ENCODE measurements at regions of chr12 and their contacts with region 1.

Region 1: DNA sequence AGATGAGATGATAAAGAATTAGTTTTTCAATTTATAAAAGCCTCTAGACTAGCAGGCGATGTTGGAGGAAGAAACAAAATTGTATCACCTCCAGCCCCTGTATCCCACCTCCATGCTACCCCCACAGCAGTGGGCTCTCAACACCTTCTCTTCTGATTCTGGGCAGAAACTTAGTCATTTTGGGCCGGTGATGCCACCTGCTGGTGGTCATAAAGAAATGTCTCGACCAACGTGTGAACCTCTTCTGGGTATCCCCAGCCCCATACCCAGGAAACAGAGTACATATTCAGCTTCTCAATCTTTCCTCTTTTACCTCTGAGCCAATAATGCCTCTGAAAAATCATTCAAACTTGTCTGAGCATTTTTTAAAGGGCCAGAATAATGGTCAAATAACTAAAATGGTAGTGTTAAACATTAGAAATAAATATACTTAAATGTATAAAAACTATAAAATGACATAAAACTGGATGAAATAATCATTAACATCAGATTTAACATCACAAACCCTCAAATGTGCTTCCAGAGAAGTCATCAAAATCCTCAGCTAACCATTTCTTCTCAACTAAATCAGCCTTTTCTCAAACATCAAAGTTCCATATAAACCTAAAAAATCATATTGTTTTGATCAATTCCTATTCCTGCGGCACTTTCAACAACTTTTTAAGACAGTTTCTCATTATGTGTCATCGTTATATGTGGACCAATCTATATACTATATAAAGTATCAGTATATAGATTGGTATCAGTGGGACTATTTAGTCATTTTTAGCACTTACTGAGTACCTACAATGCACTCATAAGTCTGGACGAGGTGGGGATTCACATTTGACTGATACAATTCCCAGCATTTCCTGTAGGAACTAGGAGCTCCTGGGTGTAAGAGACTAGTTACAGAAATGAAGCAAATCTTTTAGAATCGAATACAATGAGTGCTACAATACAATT is 69.4 kb downstream of the ATXN2 start:
- DNase-seq: peak; percentile 87
- H3K4me3 Mint-ChIP-seq: no peak overlapping the region
- H3K27ac Mint-ChIP-seq: no peak overlapping the region
- H3K4me1 Mint-ChIP-seq: peaks cover 5% of the 10 kb centered on the region
- H3K27me3 Mint-ChIP-seq: no peaks in the 10 kb centered on the region

Region 2: DNA sequence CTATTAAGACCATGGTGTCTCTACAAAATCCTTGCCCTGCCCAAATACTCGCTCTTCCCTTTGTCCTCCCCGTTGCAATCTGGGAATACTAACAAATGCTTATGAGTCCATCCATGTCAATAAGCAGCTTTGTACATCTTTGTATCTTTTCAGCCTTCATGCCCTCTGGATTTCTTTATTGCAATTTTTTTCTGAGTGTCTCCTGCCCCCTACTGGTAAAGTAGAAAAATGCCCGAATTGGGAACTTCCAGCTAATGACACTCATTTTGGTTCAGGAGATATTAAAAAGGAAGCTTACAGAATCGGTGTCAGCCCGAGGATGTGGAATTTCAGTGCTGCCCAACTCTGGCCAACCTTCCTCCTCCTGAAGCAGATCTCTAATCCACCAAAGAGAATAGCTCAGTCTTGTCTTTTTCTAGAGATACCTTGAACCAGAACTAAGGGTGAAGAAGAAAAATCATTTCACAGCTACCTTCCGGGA is 78.0 kb before region 1 on chr12:
- intact Hi-C with region 1: loop called (anchors 2 kb)
- DNase-seq: peak; percentile 83
- H3K4me3 Mint-ChIP-seq: no peak overlapping the region
- H3K27ac Mint-ChIP-seq: peak overlapping the region; percentile 12
- H3K4me1 Mint-ChIP-seq: peaks cover 42% of the 10 kb centered on the region
- H3K27me3 Mint-ChIP-seq: no peaks in the 10 kb centered on the region

Region 3: GRCh38 chr12:111505601-111506036 is 24.1 kb before region 1 on chr12:
- intact Hi-C with region 1: no loop called
- DNase-seq: no peak
- H3K4me3 Mint-ChIP-seq: no peak overlapping the region
- H3K27ac Mint-ChIP-seq: peak overlapping the region; percentile 54
- H3K4me1 Mint-ChIP-seq: peaks cover 10% of the 10 kb centered on the region
- H3K27me3 Mint-ChIP-seq: no peaks in the 10 kb centered on the region

Measured in activated CD4-positive, alpha-beta T cell treated with anti-CD3 and anti-CD28 coated beads, Interleukin-2, amount 10 ng/mL, durations not matched to agents 24 days and 14 days (primary cell).